ENCODE measurements at regions of chr9 and their contacts with region 1.

Region 1: DNA sequence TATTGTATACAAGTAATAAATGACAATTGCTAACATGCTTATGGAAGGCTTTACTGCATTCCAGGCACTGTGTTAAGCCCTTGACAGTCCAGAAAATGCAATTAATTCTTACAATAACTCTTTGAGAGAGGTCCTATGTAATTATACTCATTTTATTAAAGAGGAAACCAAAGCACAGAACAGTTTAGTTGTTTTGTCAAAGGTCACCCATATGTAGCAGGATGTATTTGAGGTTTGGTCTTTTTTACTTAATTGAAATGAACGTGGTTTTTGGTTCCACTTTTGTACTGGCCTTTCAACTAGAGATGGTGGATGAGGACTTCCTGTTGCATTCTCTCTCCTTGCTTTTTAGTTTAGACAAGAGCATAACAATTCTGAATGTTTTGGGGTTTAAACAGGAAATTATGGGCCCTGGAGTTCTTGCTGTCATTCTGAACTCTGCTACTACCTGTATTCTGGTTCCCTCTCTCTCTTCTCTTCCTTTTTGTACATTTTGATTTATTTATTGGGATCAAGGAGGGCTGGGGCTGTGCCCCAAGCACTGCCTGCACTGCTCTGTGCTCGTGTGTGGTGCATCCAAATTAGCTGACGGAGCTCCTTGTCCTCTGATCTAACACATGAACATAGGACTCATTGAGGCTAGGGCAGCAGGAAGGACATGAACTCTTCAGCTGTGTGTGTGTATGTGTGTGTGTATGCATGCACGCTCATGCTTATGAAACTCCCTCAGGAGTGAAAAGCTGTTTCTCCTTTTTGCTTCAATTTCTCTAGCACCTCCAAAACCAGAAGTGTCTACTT is 47.4 kb downstream of the SLC28A3 start:
- DNase-seq: no peak
- H3K4me3 ChIP-seq: no peak overlapping the region
- H3K27me3 ChIP-seq: no peaks in the 10 kb centered on the region
- CTCF ChIP-seq: no peak

Region 2: DNA sequence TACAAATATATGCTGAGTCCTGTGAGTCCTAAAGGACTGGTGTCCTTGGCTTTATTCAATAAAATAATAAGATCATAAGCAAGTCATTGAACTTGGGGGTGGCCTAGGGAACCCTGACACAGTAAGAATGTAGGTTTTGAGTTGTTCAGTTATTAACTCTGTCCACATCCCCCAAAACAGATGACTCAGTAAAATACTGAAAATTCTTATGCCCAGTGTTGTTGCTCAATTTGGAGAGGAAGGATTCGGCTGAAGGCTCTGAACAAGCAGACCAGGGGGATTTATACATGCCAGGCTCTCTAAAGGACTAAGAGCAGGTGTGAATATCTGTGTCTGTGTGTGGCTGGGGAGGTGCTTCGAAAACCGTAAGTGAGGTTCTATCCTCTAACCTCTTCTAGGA is 138.9 kb before region 1 on chr9:
- CTCF ChIA-PET with region 1: no interaction called
- POLR2A ChIA-PET with region 1: no interaction called
- DNase-seq: no peak
- H3K4me3 ChIP-seq: no peak overlapping the region
- H3K27me3 ChIP-seq: no peaks in the 10 kb centered on the region
- CTCF ChIP-seq: no peak

Region 3: GRCh38 chr9:84270847-84271530 is 22.2 kb before region 1 on chr9:
- CTCF ChIA-PET with region 1: no interaction called
- POLR2A ChIA-PET with region 1: no interaction called
- DNase-seq: no peak
- H3K4me3 ChIP-seq: peak overlapping the region; percentile 42
- H3K27me3 ChIP-seq: no peaks in the 10 kb centered on the region; the same call in 1 of the 2 replicates
- CTCF ChIP-seq: no peak

Region 4: DNA sequence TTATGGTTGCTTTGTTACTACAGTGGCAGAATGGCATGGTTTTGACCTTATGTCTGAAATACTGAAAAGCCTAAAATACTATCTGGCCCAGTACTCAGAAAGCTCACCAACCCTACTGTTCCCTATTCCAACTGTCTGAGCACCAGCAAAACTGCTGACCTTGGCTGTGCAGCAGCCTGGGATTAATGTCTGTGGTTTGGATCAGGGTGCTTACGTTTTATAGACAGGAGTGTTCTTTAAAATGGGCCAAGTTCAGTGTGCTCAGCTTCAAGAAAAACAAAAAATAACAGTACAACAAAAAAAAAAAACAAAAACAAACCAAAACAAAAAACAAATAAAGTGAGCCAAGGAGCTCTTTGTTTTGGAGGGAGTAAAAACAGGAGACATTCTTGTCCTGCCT is 11.0 kb after region 1 on chr9:
- CTCF ChIA-PET with region 1: interaction called, 10 read pairs
- POLR2A ChIA-PET with region 1: interaction called, 8 read pairs
- DNase-seq: no peak
- H3K4me3 ChIP-seq: no peak overlapping the region
- H3K27me3 ChIP-seq: no peaks in the 10 kb centered on the region
- CTCF ChIP-seq: no peak

Region 5: DNA sequence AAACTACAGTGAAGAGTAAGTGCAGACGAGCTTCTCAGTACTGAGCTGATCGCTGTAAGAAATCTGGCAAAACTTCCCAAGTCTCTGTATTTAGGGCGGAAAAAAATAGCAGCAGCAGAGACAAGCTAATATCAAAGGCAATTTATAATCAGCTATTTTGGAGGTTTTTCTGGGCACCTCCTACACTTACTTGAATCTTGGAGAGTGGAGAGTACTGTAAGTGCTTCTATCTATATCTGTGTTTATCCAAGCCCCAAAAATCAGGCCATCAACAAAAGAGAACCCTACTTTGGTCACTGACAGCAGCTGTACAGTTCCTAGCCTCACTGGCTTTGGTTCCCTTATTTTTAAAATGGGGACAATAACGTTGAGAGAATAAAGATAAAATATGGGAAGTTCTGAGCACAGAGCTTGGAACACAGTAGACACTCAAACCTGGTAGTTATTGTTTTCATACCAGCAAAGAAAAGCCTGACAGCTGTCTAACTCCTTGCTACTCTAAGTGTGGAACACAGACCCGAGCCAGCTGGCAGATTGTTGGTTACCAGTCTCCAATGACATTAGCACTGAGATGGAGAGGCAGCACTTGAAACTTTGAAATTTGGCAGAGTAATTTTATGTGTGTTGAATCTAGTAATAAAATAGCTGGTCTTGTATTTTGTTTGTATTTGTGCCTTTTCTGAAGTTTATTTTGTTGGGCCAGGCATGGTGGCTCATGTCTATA is 143.3 kb after region 1 on chr9:
- CTCF ChIA-PET with region 1: no interaction called
- POLR2A ChIA-PET with region 1: no interaction called
- DNase-seq: no peak
- H3K4me3 ChIP-seq: no peak overlapping the region
- H3K27me3 ChIP-seq: no peaks in the 10 kb centered on the region
- CTCF ChIP-seq: no peak

Measured in BJ (cell line).